ENCODE measurements at regions of chr4 and their contacts with region 1.

Region 1: GRCh38 chr4:158253350-158253980 is 43.2 kb downstream of the TMEM144 start:
- DNase-seq: peak in 1 of 3 donors; percentile 20
- ATAC-seq: peak; percentile 68 to 70
- H3K4me3 ChIP-seq: no peak overlapping the region
- H3K27ac ChIP-seq: no peak overlapping the region
- H3K4me1 ChIP-seq: peaks cover 5% of the 10 kb centered on the region
- H3K27me3 ChIP-seq: no peaks in the 10 kb centered on the region

Region 2: GRCh38 chr4:157992038-157992705 is 261.3 kb before region 1 on chr4:
- intact Hi-C with region 1: loop called in 2 of 4 experiments (anchors 5 kb)
- DNase-seq: no peak
- ATAC-seq: peak; percentile 78 to 79
- H3K4me3 ChIP-seq: peak overlapping the region; percentile 89
- H3K27ac ChIP-seq: no peak overlapping the region
- H3K4me1 ChIP-seq: no peaks in the 10 kb centered on the region
- H3K27me3 ChIP-seq: no peaks in the 10 kb centered on the region

Region 3: GRCh38 chr4:158112622-158113021 is 140.8 kb before region 1 on chr4:
- intact Hi-C with region 1: no loop called
- DNase-seq: no peak
- ATAC-seq: no peak
- H3K4me3 ChIP-seq: no peak overlapping the region
- H3K27ac ChIP-seq: no peak overlapping the region
- H3K4me1 ChIP-seq: no peaks in the 10 kb centered on the region
- H3K27me3 ChIP-seq: no peaks in the 10 kb centered on the region

Region 4: GRCh38 chr4:158129694-158130093 is 123.8 kb before region 1 on chr4:
- intact Hi-C with region 1: no loop called
- DNase-seq: no peak
- ATAC-seq: no peak
- H3K4me3 ChIP-seq: no peak overlapping the region
- H3K27ac ChIP-seq: no peak overlapping the region
- H3K4me1 ChIP-seq: peaks cover 3% of the 10 kb centered on the region
- H3K27me3 ChIP-seq: no peaks in the 10 kb centered on the region

Region 5: GRCh38 chr4:158193171-158193749 is 60.2 kb before region 1 on chr4:
- intact Hi-C with region 1: loop called in 2 of 4 experiments (anchors 5 to 10 kb)
- DNase-seq: no peak
- ATAC-seq: peak; percentile 70 to 71
- H3K4me3 ChIP-seq: no peak overlapping the region
- H3K27ac ChIP-seq: no peak overlapping the region
- H3K4me1 ChIP-seq: no peaks in the 10 kb centered on the region
- H3K27me3 ChIP-seq: no peaks in the 10 kb centered on the region

Region 6: DNA sequence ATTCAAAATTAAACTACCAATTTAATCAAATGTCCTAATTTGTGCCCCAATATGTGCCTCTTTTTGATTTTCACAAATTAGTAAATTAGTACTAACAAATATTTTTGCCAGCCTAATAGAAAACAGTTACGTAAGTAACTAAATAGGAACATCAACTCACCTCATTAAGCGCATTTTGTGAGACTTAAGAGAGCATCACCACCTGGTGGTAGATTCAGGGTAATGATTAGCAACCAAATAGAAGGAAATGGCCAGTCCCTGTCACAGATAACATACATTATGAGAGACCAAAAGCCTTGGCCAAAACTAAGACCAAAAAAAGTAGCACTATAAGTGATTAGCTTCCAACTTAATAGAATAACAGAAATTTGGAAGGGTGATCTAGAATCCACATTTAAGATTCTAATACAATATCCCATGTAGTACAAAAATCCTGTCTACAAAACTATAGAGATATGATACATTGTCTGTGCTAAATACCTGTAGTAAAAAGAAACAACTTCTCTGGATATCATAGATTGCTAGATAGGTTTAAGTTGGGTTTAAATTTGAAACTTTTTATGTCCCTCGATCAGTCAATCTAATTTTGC is 371.5 kb after region 1 on chr4:
- intact Hi-C with region 1: loop called in 3 of 4 experiments (anchors 10 kb)
- DNase-seq: no peak
- ATAC-seq: peak; percentile 55 to 67
- H3K4me3 ChIP-seq: no peak overlapping the region
- H3K27ac ChIP-seq: no peak overlapping the region
- H3K4me1 ChIP-seq: no peaks in the 10 kb centered on the region
- H3K27me3 ChIP-seq: no peaks in the 10 kb centered on the region